ENCODE measurements at regions of chr9 and their contacts with region 1.

Region 1: GRCh38 chr9:34403554-34404380 is 27.1 kb upstream of the MYORG start:
- DNase-seq: peak; percentile 71
- H3K4me3 Mint-ChIP-seq: no peak overlapping the region
- H3K27ac Mint-ChIP-seq: no peak overlapping the region
- H3K4me1 Mint-ChIP-seq: no peaks in the 10 kb centered on the region
- H3K27me3 Mint-ChIP-seq: no peaks in the 10 kb centered on the region

Region 2: DNA sequence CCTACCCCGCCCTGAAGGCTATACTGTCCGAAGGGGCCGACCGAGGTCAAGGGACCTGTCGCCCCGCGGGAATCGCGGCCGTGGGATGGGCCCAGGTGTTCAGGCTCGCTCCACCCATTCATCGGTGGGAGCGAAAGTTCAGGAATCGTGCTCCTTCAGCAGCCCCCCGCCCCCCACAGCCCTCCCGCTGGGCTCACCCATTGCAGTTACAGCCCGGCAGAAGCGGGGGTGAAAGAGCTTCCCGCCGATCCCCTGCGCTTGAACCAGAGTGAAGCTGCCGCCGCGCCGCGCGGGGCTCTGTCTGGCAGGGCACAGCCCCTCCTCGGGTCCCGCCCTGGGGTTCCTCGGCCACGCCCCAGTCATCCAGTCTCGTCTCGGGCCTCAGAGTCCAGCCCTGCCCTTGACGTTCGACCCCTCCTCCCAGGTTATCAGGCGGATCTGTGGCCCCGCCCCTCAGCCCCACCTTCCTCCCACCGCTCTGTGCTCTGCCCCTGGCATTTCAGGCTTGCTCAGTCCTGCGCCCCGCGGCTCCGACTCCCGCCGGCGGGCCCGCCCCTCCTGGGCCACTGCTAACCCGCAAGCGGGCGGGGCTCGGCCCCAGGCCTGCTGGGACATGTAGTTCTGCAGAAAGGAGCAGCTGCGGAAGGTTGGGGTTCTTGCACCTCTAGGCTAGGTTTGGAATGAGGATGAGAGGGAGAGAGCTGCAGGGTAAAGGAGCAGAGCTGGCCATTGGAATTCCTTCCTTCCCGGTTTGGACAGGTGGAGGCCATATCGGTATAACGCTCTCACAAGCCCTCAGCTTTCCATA is 27.0 kb before region 1 on chr9 and contains the start of gene MYORG:
- CTCF ChIA-PET with region 1: interaction called, 19 read pairs
- POLR2A ChIA-PET with region 1: no interaction called
- intact Hi-C with region 1: no loop called
- DNase-seq: peak; percentile 99
- H3K4me3 Mint-ChIP-seq: peak within 1 kb of the TSS; percentile 78
- H3K27ac Mint-ChIP-seq: no peak within 1 kb of the TSS
- H3K4me1 Mint-ChIP-seq: peaks cover 30% of the 10 kb centered on the region
- H3K27me3 Mint-ChIP-seq: no peaks in the 10 kb centered on the region
- total RNA-seq, gene MYORG: 1.9 to 2.9 TPM

Region 3: DNA sequence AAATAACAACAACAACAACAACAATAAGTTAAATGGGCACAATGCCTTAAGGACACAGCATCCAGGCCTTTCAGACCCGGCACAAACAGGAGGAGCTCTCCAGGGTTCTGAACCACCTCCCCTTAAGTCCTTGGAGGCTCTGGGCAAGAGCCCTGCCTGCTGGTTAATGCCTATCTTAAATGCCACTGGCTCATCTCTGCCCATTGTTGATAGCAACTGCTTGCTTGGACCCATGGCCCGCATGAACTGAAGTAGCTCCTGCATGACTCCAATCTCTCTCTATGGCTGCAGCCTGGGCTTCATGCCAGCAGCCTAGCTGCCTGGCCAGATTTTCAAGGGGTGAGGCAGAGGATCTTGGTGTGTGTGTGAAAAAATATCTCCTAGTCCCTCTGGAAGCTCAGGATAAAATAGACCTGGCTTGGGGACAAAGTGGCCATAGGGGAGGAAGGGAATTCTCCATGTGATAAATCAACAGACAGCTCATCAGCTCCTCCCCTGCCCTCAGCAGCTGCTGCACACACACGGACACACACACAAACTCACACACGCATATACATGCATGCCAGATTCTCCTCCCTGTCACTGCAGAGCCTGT is 27.2 kb after region 1 on chr9:
- CTCF ChIA-PET with region 1: interaction called, 13 read pairs
- POLR2A ChIA-PET with region 1: no interaction called
- intact Hi-C with region 1: no loop called
- DNase-seq: peak; percentile 16
- H3K4me3 Mint-ChIP-seq: no peak overlapping the region
- H3K27ac Mint-ChIP-seq: no peak overlapping the region
- H3K4me1 Mint-ChIP-seq: no peaks in the 10 kb centered on the region
- H3K27me3 Mint-ChIP-seq: no peaks in the 10 kb centered on the region

Region 4: DNA sequence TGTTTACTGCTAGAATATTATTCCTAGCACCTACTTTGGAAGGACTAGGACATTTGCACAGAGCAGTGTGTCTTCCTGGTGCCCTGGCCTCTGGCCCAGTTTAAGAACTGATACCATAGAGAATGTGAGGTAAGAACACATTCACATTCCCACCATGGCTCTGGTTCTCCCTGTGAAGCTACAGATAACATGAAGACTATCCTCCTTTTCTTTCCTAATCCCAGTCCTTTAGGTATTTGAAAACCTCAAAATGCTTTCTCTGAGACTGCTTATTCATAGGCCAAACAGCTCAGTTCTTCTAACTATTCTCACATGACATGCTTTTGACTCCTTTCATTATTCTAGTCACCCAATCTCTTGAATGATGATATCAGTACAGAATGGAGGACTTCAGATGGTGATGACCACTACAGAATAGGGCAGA is 42.7 kb after region 1 on chr9:
- CTCF ChIA-PET with region 1: interaction called, 10 read pairs
- POLR2A ChIA-PET with region 1: no interaction called
- intact Hi-C with region 1: no loop called
- DNase-seq: no peak
- H3K4me3 Mint-ChIP-seq: no peak overlapping the region
- H3K27ac Mint-ChIP-seq: no peak overlapping the region
- H3K4me1 Mint-ChIP-seq: peaks cover 6% of the 10 kb centered on the region
- H3K27me3 Mint-ChIP-seq: no peaks in the 10 kb centered on the region

Region 5: GRCh38 chr9:34500623-34501267 is 97.0 kb after region 1 on chr9:
- CTCF ChIA-PET with region 1: interaction called, 40 read pairs
- POLR2A ChIA-PET with region 1: no interaction called
- intact Hi-C with region 1: loop called (anchors 1 kb)
- DNase-seq: peak; percentile 89
- H3K4me3 Mint-ChIP-seq: no peak overlapping the region
- H3K27ac Mint-ChIP-seq: no peak overlapping the region
- H3K4me1 Mint-ChIP-seq: peaks cover 14% of the 10 kb centered on the region
- H3K27me3 Mint-ChIP-seq: no peaks in the 10 kb centered on the region

Region 6: GRCh38 chr9:34546834-34547827 is 143.4 kb after region 1 on chr9:
- CTCF ChIA-PET with region 1: interaction called, 18 read pairs
- POLR2A ChIA-PET with region 1: no interaction called
- intact Hi-C with region 1: loop called (anchors 2 kb)
- DNase-seq: peak; percentile 77
- H3K4me3 Mint-ChIP-seq: no peak overlapping the region
- H3K27ac Mint-ChIP-seq: no peak overlapping the region
- H3K4me1 Mint-ChIP-seq: no peaks in the 10 kb centered on the region
- H3K27me3 Mint-ChIP-seq: peaks cover 9% of the 10 kb centered on the region

Region 7: GRCh38 chr9:34559624-34560452 is 156.1 kb after region 1 on chr9:
- CTCF ChIA-PET with region 1: no interaction called
- POLR2A ChIA-PET with region 1: no interaction called
- intact Hi-C with region 1: no loop called
- DNase-seq: no peak
- H3K4me3 Mint-ChIP-seq: no peak overlapping the region
- H3K27ac Mint-ChIP-seq: no peak overlapping the region
- H3K4me1 Mint-ChIP-seq: no peaks in the 10 kb centered on the region
- H3K27me3 Mint-ChIP-seq: peaks cover 25% of the 10 kb centered on the region

Region 8: GRCh38 chr9:34603610-34604231 is 200.0 kb after region 1 on chr9:
- CTCF ChIA-PET with region 1: interaction called, 22 read pairs
- POLR2A ChIA-PET with region 1: no interaction called
- intact Hi-C with region 1: no loop called
- DNase-seq: peak; percentile 85
- H3K4me3 Mint-ChIP-seq: no peak overlapping the region
- H3K27ac Mint-ChIP-seq: no peak overlapping the region
- H3K4me1 Mint-ChIP-seq: no peaks in the 10 kb centered on the region
- H3K27me3 Mint-ChIP-seq: no peaks in the 10 kb centered on the region